Posterior vena cava (tissue), 2 donors: ENCODE measurements at regions of chr16 and their contacts with region 1.

Region 1: GRCh38 chr16:88834670-88835069 is 22.1 kb downstream of the GALNS start:
- DNase-seq: no peak

Region 2: DNA sequence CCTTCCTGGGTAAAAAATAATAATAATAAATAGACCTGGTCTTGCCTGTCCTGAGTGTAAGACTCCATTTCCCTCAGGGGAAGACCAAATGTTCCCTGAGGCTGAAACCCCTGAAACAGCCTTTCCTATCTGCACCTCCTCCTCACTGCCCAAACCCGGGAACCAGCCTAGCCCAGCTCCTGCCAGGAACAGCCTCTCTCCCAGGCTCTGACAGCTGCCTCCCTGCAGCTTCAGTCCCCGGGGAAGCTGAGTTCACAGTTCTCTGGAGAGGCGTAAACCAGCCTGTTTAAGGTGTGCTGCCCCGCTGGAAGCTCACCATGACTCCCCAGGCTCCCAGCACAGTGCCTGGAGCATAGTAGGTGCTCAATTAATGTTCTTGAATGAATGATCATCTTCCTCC is 38.4 kb before region 1 on chr16:
- intact Hi-C with region 1: no loop called
- DNase-seq: no peak

Region 3: GRCh38 chr16:88806491-88807111 is 28.1 kb before region 1 on chr16:
- intact Hi-C with region 1: loop called in 1 of 2 experiments (anchors 1 kb)
- DNase-seq: no peak